HepG2 (cell line): ENCODE measurements at regions of chr20 and their contacts with region 1.

Region 1: GRCh38 chr20:23340524-23340923 is 10.1 kb upstream of the NXT1 start:
- DNase-seq: peak; percentile 77
- ATAC-seq: peak; percentile 85
- H3K4me3 ChIP-seq: no peak overlapping the region
- H3K27ac ChIP-seq: no peak overlapping the region
- H3K4me1 ChIP-seq: peaks cover 27% of the 10 kb centered on the region
- H3K27me3 ChIP-seq: no peaks in the 10 kb centered on the region; a peak in 1 of 5 replicates
- CTCF ChIP-seq: peak; percentile 96
- EP300 ChIP-seq: no peak
- POLR2A ChIP-seq: no peak
- RAD21 ChIP-seq: peak; percentile 90

Region 2: GRCh38 chr20:22339091-22339881 is 1001.2 kb before region 1 on chr20:
- CTCF ChIA-PET with region 1: no interaction called
- POLR2A ChIA-PET with region 1: no interaction called
- in situ Hi-C with region 1: loop called (anchors 5 kb)
- intact Hi-C with region 1: loop called (anchors 2 kb)
- DNase-seq: peak; percentile 84
- ATAC-seq: peak; percentile 77
- H3K4me3 ChIP-seq: no peak overlapping the region
- H3K27ac ChIP-seq: no peak overlapping the region
- H3K4me1 ChIP-seq: peaks cover 5% of the 10 kb centered on the region; the same call in 1 of the 2 replicates
- H3K27me3 ChIP-seq: peaks cover 0 to 9% of the 10 kb centered on the region in 2 experiments; a peak in 1 of 5 replicates
- CTCF ChIP-seq: peak; percentile 96
- EP300 ChIP-seq: no peak
- POLR2A ChIP-seq: no peak
- RAD21 ChIP-seq: peak; percentile 95

Region 3: DNA sequence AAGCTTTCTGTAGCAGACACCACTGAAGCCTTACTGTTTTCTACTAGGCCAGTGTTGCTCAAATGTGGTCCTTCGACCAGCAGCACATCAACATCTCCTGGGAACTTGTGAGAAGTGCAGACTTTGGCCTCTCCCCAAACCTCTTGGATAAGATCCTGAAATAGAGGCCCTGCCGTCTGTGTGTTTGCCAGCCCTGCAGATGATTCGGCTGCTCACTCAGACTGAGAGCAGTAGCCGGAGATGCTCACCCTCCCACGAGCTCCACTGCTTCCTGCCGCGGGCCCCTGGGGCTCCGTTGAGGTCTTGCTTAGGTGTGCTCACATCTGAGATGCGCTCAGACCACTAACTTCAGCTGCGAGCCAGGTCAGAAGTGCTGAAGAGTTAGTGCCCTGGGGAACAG is 434.9 kb before region 1 on chr20:
- CTCF ChIA-PET with region 1: no interaction called
- POLR2A ChIA-PET with region 1: no interaction called
- in situ Hi-C with region 1: no loop called
- intact Hi-C with region 1: loop called (anchors 2 kb)
- DNase-seq: no peak
- ATAC-seq: no peak
- H3K4me3 ChIP-seq: no peak overlapping the region
- H3K27ac ChIP-seq: no peak overlapping the region
- H3K4me1 ChIP-seq: no peaks in the 10 kb centered on the region
- H3K27me3 ChIP-seq: peaks cover 0 to 17% of the 10 kb centered on the region in 2 experiments; a peak in 1 of 5 replicates
- CTCF ChIP-seq: no peak
- EP300 ChIP-seq: no peak
- POLR2A ChIP-seq: no peak
- RAD21 ChIP-seq: no peak

Region 4: DNA sequence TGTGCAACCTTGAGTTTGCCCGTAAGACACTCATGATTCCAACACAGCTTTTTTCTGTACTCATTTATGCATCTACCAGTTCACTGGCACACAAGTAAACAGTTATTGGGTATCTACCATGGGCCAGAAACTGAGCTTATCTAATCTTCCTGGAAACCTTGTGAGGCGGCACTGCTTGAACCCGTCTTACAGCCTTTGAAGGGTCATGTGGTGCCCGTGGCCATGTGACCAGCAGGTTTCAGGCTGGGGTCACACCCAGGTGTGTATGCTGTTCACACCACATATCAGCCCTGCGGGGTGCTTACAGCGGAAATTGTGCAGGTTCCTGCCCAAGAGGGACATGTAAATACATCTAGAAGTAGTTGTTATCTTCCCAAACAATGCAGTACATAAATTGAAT is 297.1 kb before region 1 on chr20:
- CTCF ChIA-PET with region 1: interaction called, 3 read pairs
- POLR2A ChIA-PET with region 1: no interaction called
- in situ Hi-C with region 1: no loop called
- intact Hi-C with region 1: loop called (anchors 1 kb)
- DNase-seq: no peak
- ATAC-seq: peak; percentile 56
- H3K4me3 ChIP-seq: no peak overlapping the region
- H3K27ac ChIP-seq: no peak overlapping the region
- H3K4me1 ChIP-seq: no peaks in the 10 kb centered on the region
- H3K27me3 ChIP-seq: peaks cover 0 to 24% of the 10 kb centered on the region in 2 experiments; a peak in 3 of 5 replicates
- CTCF ChIP-seq: peak; percentile 68
- EP300 ChIP-seq: no peak
- POLR2A ChIP-seq: no peak
- RAD21 ChIP-seq: no peak

Region 5: GRCh38 chr20:23231596-23232581 is 108.6 kb before region 1 on chr20:
- CTCF ChIA-PET with region 1: no interaction called
- POLR2A ChIA-PET with region 1: no interaction called
- in situ Hi-C with region 1: no loop called
- intact Hi-C with region 1: loop called (anchors 1 kb)
- DNase-seq: peak; percentile 45
- ATAC-seq: peak; percentile 43
- H3K4me3 ChIP-seq: no peak overlapping the region
- H3K27ac ChIP-seq: peak overlapping the region; percentile 27
- H3K4me1 ChIP-seq: peaks cover 33% of the 10 kb centered on the region
- H3K27me3 ChIP-seq: no peaks in the 10 kb centered on the region; a peak in 1 of 5 replicates
- CTCF ChIP-seq: no peak
- EP300 ChIP-seq: no peak
- POLR2A ChIP-seq: no peak
- RAD21 ChIP-seq: no peak